Posterior cingulate gyrus (tissue), 11 donors: ENCODE measurements at regions of chr9 and their contacts with region 1.

Region 1: GRCh38 chr9:134135343-134136118 is at the start of gene WDR5:
- DNase-seq: peak; percentile 84 to 98 (median 92)

Region 2: DNA sequence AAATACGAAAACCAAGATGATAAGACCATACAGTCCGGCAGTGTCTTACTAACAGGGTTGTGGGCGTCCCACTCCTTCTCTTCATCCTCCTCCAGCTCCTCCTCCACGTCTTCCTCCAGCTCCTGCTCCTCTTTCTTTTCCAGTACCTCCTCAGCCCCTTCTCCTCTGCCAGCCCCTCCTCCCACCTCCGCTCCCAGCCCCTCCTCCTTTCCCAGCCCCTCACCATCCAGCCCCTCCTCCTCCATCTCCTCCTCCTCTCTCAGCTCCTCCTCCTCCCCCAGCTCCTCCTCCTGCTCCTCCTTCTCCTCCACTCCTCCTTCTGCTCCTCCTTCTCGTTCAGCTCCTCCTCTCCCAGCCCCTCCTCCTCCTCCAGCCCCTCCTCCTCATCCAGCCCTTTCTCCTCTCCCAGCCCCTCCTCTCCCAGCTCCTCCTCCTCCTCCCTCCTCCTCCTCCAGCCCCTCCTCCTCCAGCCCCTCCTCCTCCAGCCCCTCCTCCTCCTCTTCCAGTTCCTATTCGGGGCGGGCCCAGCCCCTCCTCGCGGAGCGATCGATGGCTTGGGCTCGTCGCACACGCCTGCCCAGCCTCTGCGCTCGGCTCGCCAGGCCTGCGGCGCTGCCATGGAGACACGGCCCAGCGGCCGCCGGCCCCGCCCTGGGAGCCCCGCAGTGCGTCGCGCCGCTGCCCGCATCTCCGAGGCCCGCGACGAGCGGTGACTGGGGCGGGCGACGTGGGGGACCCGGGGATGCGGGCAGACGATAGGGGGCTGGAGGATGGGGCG is 110.5 kb before region 1 on chr9 and contains the start of gene BRD3OS:
- intact Hi-C with region 1: loop called (anchors 1 kb)
- DNase-seq: peak; percentile 89 to 99 (median 94)

Region 3: GRCh38 chr9:134067904-134068743 is 67.4 kb before region 1 on chr9 and contains the start of gene BRD3:
- intact Hi-C with region 1: loop called (anchors 2 kb)
- DNase-seq: peak; percentile 60 to 98 (median 83)

Region 4: DNA sequence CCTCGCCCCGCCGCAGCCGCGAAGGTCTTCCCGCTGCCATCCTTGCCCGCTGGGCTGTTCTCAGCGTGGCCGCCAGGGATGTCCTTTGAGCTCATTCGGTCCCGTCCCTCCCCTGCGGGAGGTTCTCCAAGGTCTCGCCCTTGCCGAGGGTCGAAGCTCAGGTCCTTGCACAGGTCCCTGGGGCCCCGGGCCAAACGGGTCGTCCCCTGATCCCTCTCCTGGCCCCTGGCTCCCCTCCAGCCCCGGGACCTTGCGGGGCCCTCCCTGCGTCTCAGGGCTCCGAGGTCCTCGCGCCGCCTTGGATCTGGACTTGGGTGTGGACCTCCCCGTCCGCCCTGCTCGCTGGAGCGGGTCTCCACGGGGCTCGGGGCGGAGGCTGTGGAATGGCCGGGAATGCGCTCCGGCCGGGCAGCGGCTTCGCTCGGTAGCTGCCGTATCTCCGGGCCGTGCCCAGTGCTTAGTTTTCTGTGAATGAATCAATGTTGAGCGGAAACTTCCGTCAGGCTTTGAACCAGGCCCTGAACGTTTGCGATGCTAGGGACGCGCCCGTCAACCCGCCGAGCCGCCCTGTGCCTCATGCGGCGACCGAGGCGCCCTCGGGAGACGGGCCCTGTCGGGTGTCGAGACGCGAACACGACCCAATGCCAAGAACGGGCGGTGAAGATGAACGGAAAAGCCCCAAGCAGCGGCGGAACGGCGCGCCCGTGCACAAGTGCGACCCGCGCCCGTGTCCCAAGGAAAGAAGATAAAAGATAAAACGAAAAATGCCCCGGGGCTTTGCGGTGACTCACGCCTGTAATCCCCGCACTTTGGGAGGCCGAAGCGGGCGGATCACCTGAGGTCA is 28.0 kb after region 1 on chr9:
- intact Hi-C with region 1: loop called (anchors 2 kb)
- DNase-seq: peak in 7 of 10 donors; percentile 45 to 93 (median 51)

Region 5: DNA sequence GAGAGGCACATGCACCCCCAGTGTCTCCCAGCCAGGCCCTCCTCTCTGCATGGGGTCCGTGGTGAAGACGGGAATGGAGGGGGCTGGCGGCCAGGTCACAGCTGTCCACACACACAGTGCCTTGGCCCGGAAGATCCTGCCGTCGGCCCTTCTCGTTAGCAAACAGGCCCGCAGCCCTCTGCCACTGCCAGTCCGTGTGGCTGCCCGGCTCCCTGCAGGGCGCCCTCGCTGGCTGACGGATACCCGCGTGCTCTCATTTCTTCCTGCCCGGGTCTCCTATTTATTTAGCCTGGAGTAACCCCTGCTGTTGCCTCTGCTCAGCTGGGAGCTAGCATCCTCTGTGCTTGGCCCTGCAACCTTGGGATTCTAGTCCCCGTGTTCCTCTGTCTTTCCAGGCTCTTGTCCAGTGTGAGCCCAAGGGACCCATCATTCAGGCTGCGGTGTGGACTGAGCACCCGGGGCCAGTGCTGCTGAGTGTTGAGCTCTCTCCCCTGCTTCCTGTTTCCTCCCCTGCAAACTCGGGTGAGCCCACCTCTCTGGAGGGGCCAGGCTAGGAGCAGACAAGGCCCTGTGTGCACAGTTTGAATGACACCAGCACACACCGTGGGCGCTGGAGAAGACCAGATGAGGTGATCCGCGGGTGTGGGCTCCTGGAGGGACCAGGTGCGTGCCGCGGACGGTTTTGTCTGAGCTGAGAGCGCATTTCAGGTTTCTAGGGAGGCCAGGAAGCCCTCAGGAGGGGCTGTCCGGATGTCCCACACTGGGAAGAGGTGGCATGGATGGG is 43.4 kb after region 1 on chr9:
- intact Hi-C with region 1: no loop called
- DNase-seq: peak in 4 of 10 donors; percentile 16 to 88 (median 79)